Endothelial cell of umbilical vein (primary cell): ENCODE measurements at regions of chr14 and their contacts with region 1.

Region 1: GRCh38 chr14:95993768-95994592 is 45.2 kb upstream of the C14orf132 start:
- DNase-seq: peak; percentile 40
- H3K4me3 ChIP-seq: no peak overlapping the region
- H3K27ac ChIP-seq: no peak overlapping the region
- H3K4me1 ChIP-seq: no peaks in the 10 kb centered on the region
- H3K27me3 ChIP-seq: no peaks in the 10 kb centered on the region
- CTCF ChIP-seq: peak; percentile 62 to 67
- POLR2A ChIP-seq: no peak

Region 2: DNA sequence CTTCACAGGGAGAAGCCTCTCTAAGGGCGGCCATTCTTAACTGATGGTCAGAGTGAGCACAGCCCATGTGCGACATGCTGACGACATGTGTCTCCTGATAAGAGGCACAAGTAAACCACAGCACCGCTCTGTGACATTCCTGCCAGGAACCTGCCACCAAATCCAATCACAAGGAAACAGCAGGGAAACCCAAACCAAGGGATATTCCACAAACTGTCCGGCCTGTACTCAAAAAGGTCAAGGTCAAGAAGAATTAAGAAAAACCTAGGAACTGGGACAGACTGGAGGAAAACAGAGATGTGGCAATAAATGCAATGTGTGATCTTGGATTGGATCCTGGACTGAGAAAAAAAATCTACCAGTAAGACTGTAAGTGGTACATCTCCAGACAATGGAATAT is 569.5 kb before region 1 on chr14:
- CTCF ChIA-PET with region 1: interaction called, 10 read pairs
- POLR2A ChIA-PET with region 1: no interaction called
- dilution Hi-C with region 1: no loop called
- intact Hi-C with region 1: loop called (anchors 2 kb)
- DNase-seq: no peak
- H3K4me3 ChIP-seq: no peak overlapping the region
- H3K27ac ChIP-seq: no peak overlapping the region
- H3K4me1 ChIP-seq: no peaks in the 10 kb centered on the region
- H3K27me3 ChIP-seq: no peaks in the 10 kb centered on the region
- CTCF ChIP-seq: no peak
- POLR2A ChIP-seq: no peak

Region 3: DNA sequence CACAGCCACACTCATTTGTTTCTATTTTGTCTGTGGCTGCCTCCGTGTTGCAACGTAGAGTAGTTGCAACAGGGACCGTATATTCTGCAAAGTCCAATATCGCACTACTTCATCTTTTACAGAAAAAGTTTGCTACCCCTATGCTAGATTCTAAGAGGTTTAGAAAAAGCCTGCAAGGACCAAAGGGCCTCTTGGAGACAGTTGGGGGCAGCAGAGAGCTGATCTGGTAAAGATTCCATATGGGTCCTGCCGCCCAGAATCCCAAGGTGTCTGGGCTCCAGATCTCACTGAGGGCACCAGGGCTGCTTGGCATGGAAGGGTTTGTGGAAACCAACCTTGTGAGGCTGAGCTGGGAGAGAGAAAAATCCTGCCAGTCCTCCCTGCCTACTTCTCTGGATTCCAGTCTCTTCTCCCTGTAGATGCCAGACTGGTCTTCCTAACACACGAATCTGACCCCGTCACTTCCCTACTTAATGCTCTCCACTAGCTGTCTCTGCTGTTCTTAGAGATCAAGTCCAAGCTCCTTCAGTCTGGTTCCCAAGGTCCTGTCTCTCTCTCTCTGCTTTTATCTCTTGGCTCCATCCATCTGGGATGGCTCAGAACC is 384.5 kb before region 1 on chr14:
- CTCF ChIA-PET with region 1: interaction called, 7 read pairs
- POLR2A ChIA-PET with region 1: no interaction called
- dilution Hi-C with region 1: no loop called
- intact Hi-C with region 1: loop called (anchors 1 kb)
- DNase-seq: peak; percentile 29
- H3K4me3 ChIP-seq: no peak overlapping the region
- H3K27ac ChIP-seq: no peak overlapping the region
- H3K4me1 ChIP-seq: no peaks in the 10 kb centered on the region
- H3K27me3 ChIP-seq: no peaks in the 10 kb centered on the region
- CTCF ChIP-seq: peak; percentile 43 to 64
- POLR2A ChIP-seq: no peak

Region 4: GRCh38 chr14:95774265-95775160 is 219.5 kb before region 1 on chr14:
- CTCF ChIA-PET with region 1: interaction called, 3 read pairs
- POLR2A ChIA-PET with region 1: no interaction called
- dilution Hi-C with region 1: no loop called
- intact Hi-C with region 1: loop called (anchors 1 kb)
- DNase-seq: peak; percentile 55
- H3K4me3 ChIP-seq: no peak overlapping the region
- H3K27ac ChIP-seq: no peak overlapping the region
- H3K4me1 ChIP-seq: no peaks in the 10 kb centered on the region
- H3K27me3 ChIP-seq: no peaks in the 10 kb centered on the region
- CTCF ChIP-seq: peak; percentile 76 to 85
- POLR2A ChIP-seq: no peak

Region 5: DNA sequence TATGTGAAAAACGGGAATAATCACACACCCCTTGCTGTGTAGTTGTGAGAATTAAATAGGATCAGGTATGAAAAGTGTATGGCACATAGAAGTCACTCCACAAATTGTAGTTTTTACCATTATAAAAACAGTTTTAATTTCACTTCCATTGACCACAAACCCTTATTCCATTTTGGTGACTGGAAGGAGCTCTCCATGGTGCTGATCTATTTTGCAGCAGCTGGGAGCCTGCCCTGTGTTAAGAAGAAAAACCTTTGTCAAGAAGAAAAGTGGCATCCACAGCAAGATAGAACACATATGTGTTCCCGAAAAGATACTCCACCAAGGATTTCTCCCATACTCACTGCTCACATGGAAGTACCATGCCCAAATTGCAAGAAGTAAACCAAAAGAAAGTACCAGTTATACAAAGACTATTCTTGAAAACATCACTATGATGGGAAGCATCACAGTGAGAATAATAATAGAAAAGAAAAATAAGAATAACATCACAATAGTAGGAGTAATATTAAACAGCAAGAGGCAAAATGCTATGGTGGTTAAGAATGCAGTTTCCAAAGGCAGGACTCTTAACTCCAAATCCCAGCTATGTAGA is 58.7 kb before region 1 on chr14:
- CTCF ChIA-PET with region 1: no interaction called
- POLR2A ChIA-PET with region 1: no interaction called
- dilution Hi-C with region 1: no loop called
- intact Hi-C with region 1: no loop called
- DNase-seq: peak; percentile 19
- H3K4me3 ChIP-seq: no peak overlapping the region
- H3K27ac ChIP-seq: no peak overlapping the region
- H3K4me1 ChIP-seq: no peaks in the 10 kb centered on the region
- H3K27me3 ChIP-seq: no peaks in the 10 kb centered on the region
- CTCF ChIP-seq: no peak
- POLR2A ChIP-seq: no peak

Region 6: GRCh38 chr14:96100161-96101029 is 106.4 kb after region 1 on chr14:
- CTCF ChIA-PET with region 1: interaction called, 5 read pairs
- POLR2A ChIA-PET with region 1: no interaction called
- dilution Hi-C with region 1: no loop called
- intact Hi-C with region 1: loop called (anchors 1 kb)
- DNase-seq: peak; percentile 64
- H3K4me3 ChIP-seq: no peak overlapping the region
- H3K27ac ChIP-seq: no peak overlapping the region
- H3K4me1 ChIP-seq: no peaks in the 10 kb centered on the region
- H3K27me3 ChIP-seq: no peaks in the 10 kb centered on the region
- CTCF ChIP-seq: peak; percentile 81 to 83
- POLR2A ChIP-seq: no peak

Region 7: GRCh38 chr14:96275177-96276112 is 281.5 kb after region 1 on chr14:
- CTCF ChIA-PET with region 1: interaction called, 16 read pairs
- POLR2A ChIA-PET with region 1: no interaction called
- dilution Hi-C with region 1: no loop called
- intact Hi-C with region 1: loop called (anchors 1 kb)
- DNase-seq: peak; percentile 51
- H3K4me3 ChIP-seq: no peak overlapping the region
- H3K27ac ChIP-seq: no peak overlapping the region
- H3K4me1 ChIP-seq: no peaks in the 10 kb centered on the region
- H3K27me3 ChIP-seq: no peaks in the 10 kb centered on the region
- CTCF ChIP-seq: peak; percentile 89 to 98
- POLR2A ChIP-seq: no peak

Region 8: DNA sequence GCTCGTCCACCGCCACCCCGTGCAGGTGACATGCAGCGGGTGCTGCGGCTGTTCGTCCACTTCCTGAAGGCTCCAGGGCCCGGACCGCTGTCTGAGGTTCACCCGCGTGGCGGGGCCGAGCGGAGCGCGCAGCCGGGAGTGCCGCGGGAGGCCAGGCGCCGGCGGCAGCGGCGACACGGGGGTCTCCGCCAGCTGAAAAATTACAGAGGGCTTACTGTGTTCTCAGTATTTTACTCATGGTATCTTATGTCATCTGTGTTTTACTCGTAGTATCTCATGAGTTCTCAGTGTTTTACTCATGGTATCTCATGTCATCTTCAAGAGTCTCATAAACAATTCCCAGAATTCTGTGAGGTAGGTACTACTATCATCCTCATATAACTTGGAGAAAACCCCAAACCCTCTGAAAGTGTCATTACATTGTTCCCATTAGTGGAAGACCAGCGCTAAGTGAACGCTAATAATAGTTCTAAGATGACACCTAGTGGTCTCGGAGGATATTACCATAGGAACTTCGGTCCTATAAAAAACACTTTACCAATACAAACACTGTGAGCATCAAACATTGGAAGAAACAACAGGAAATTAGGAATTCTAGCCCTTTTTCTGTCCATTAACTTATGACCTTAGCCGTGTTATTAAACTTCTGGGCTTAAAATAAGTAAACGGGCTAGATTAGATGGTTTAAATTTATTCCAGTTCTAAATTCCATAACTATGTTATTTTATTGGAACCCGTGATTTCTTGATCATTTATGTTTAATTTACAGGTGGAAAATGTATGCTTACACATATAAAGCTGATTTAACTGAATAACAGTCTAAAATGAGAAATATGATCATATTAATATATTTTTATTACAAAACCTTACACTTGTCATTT is 430.4 kb after region 1 on chr14:
- CTCF ChIA-PET with region 1: interaction called, 3 read pairs
- POLR2A ChIA-PET with region 1: no interaction called
- dilution Hi-C with region 1: no loop called
- intact Hi-C with region 1: loop called (anchors 2 kb)
- DNase-seq: peak; percentile 82
- H3K4me3 ChIP-seq: peak overlapping the region; percentile 9 to 43 (median 25)
- H3K27ac ChIP-seq: no peak overlapping the region
- H3K4me1 ChIP-seq: peaks cover 7% of the 10 kb centered on the region
- H3K27me3 ChIP-seq: no peaks in the 10 kb centered on the region
- CTCF ChIP-seq: peak; percentile 41 to 48
- POLR2A ChIP-seq: no peak